ENCODE measurements at regions of chrX and their contacts with region 1.

Region 1: DNA sequence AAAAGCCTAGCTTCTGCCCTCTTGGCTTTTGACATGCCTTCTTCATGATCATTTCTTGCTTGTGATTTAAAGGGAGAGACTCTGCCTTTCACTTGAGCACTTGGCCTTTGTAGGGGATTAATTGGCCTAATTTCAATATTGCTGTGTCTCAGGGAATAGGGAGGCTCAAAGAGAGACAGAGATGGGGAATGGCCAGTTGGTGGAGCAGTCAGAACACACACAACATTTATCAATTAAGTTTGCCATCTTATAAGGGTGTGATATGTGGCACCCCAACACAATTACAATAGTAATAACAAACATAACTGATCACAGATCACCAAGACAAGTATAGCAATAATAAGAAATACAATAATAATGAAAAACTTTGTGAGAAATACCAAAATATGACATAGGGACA is 122.5 kb upstream of the VCX start:
- DNase-seq: no peak
- H3K4me3 ChIP-seq: no peak overlapping the region
- H3K27ac ChIP-seq: no peak overlapping the region
- H3K4me1 ChIP-seq: no peaks in the 10 kb centered on the region
- H3K27me3 ChIP-seq: no peaks in the 10 kb centered on the region
- CTCF ChIP-seq: no peak
- POLR2A ChIP-seq: no peak

Region 2: DNA sequence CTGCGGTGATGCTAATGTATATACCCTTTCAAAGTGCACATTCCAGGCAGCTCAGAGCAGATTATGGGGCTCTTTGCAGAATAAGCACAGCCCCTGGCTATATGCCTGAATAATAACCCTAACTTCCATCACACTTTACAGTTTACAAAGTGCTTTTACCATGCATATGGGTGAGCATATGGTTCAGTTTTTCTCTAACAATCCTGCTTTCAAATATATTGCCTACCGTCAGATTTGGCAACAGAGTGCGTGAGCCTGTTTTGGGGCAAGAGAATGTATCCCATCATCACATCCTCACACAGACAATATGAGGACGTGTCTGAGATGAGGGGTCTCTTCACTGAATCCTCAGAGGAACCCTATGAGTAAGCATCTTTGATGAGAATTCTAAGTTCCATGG is 40.3 kb before region 1 on chrX:
- intact Hi-C with region 1: loop called (anchors 2 kb)
- DNase-seq: no peak
- H3K4me3 ChIP-seq: no peak overlapping the region
- H3K27ac ChIP-seq: no peak overlapping the region
- H3K4me1 ChIP-seq: no peaks in the 10 kb centered on the region
- H3K27me3 ChIP-seq: no peaks in the 10 kb centered on the region
- CTCF ChIP-seq: no peak
- POLR2A ChIP-seq: no peak